ENCODE measurements at regions of chr3 and their contacts with region 1.

Region 1: DNA sequence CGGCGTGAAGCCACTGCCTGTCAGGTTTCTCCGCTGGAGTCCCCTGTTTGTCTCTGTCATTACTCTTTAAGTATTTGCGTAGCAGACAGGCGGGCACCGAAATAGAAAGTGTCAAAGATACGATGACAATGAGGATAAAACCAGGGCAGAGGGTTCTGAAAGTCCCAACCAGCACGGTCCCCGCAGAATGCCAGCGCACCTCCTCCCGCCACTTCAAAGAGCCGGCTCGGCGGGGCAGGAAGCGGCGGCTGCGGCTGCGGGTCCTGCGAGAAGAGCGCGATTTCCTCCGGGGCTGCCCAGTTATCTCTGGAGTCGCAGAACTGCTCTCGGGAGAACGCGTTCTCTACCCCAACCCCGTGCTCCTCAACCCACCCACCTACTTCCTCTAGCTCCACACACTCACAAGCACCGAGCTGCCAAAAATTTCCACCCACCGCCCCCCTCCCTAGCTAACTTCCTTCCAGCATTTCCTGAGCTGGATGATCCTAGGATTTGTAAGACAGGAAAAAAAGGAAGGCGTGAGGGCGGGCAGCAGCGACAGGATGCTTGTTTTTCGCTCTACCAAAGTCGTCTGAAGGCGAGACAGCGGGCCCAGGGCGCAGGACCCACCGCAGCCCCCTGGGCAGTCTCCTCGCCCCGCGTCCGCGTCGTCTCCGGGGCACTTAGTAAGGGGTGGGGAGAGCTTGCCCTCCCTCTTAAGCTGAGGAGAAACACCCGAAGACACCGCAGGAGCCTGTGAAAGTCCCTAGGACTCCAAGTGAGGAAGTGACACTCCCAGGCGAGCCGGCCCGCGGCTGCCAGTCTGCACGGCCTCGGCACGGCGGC is at the start of gene ARHGAP31:
- DNase-seq: peak; percentile 83 to 88 (median 86)
- ATAC-seq: peak; percentile 70 to 79 (median 76)
- H3K4me3 ChIP-seq: peak within 1 kb of the TSS; percentile 74 to 97 (median 88)
- H3K27ac ChIP-seq: peak within 1 kb of the TSS; percentile 96 to 100 (median 98)
- H3K4me1 ChIP-seq: peaks cover 3 to 55% (median 41%) of the 10 kb centered on the region in 12 donors
- H3K27me3 ChIP-seq: no peaks in the 10 kb centered on the region
- CTCF ChIP-seq: no peak
- POLR2A ChIP-seq: peak in 1 of 2 donors; percentile 70
- total RNA-seq, gene ARHGAP31: 29.8 to 79.1 (median 37.8) TPM

Region 2: GRCh38 chr3:119240591-119241434 is 53.3 kb before region 1 on chr3 and contains the start of gene B4GALT4:
- intact Hi-C with region 1: loop called in 1 of 10 experiments (anchors 5 kb)
- DNase-seq: peak; percentile 89 to 93 (median 92)
- ATAC-seq: peak; percentile 88 to 97 (median 96)
- H3K4me3 ChIP-seq: peak within 1 kb of the TSS; percentile 45 to 92 (median 73)
- H3K27ac ChIP-seq: peak within 1 kb of the TSS; percentile 75 to 97 (median 91)
- H3K4me1 ChIP-seq: peaks cover 0 to 47% (median 23%) of the 10 kb centered on the region in 12 donors
- H3K27me3 ChIP-seq: no peaks in the 10 kb centered on the region
- CTCF ChIP-seq: peak in 1 of 12 donors; percentile 6
- POLR2A ChIP-seq: peak; percentile 53 to 85
- total RNA-seq, gene B4GALT4: 8.1 to 15.9 (median 10.6) TPM

Region 3: DNA sequence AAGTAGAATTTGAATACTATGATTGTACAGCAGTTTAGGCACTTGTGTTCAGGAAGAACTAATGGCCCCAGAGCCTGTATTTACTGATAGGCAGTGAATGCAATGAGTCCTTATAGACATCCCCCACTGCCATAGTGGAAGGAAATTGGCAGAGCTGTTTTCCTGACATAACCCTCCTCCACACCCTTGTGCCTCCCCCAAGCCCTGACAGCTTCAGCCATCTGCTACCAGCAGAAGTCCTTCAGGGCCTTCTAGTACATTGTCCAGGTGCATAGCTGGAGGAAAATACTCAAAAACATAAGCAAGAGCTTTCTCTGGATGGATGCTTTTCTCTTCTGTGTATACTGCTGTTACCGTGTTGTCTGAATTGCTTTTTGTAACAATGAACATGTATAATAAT is 20.7 kb after region 1 on chr3:
- intact Hi-C with region 1: loop called in 1 of 10 experiments (anchors 2 kb)
- DNase-seq: no peak
- ATAC-seq: peak in 1 of 4 donors; percentile 32
- H3K4me3 ChIP-seq: no peak overlapping the region
- H3K27ac ChIP-seq: no peak overlapping the region
- H3K4me1 ChIP-seq: peaks cover 0 to 66% (median 43%) of the 10 kb centered on the region in 12 donors
- H3K27me3 ChIP-seq: no peaks in the 10 kb centered on the region
- CTCF ChIP-seq: no peak
- POLR2A ChIP-seq: no peak

Region 4: DNA sequence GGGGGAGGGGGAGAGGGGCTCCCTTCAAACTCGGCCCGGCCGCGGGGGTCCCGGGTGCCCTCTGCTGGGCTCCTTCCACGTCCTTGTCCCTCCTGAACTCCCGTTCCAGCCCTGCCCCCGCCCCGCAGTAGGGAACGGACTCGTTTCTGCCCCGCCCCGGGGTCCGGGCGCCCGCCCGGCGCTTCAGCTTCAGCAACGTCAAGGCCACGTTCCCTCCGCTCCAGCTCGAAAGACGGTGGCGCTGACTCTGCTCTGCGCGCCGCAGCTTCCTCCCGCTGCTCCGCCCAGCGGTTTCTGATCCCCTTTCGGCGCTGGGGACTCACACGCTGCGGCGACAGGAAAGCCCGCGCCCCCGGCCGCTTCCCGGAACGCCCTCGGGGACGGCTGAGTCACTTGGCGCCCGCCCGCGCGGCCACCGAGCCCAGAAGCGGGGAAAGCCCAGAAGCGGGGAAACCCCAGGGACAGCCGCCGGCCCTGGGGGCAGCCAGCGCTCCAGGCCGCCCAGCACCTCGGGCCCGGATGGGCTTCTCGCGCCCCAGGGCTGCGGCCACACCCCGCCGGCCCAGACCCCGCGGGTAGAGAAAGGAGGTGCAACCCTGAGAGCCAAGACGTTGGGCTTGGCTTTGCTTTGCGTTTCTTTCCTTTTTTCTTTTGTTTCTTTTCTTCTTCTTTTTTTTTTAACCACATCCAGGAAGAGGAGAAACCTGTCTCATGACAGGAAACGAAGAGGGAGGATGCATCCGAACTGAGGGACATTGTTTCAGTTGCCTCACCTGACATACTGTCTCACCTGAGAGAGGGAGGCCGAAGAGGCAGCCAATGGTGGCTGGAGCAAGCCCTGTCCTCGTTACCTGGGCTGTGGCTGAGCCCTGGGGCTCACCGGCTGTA is 29.0 kb after region 1 on chr3:
- intact Hi-C with region 1: loop called in 5 of 10 experiments (anchors 2 kb)
- DNase-seq: peak; percentile 90 to 96 (median 93)
- ATAC-seq: peak; percentile 84 to 95 (median 93)
- H3K4me3 ChIP-seq: peak overlapping the region; percentile 8 to 76 (median 64)
- H3K27ac ChIP-seq: peak overlapping the region; percentile 80 to 98 (median 92)
- H3K4me1 ChIP-seq: peaks cover 0 to 73% (median 43%) of the 10 kb centered on the region in 12 donors
- H3K27me3 ChIP-seq: no peaks in the 10 kb centered on the region
- CTCF ChIP-seq: peak in 8 of 12 donors; percentile 9 to 44 (median 25)
- POLR2A ChIP-seq: peak in 1 of 2 donors; percentile 39

Region 5: GRCh38 chr3:119331661-119332060 is 37.6 kb after region 1 on chr3:
- intact Hi-C with region 1: loop called in 2 of 10 experiments (anchors 1 to 5 kb)
- DNase-seq: no peak
- ATAC-seq: peak in 2 of 4 donors; percentile 36 to 46
- H3K4me3 ChIP-seq: no peak overlapping the region
- H3K27ac ChIP-seq: peak overlapping the region in 8 of 12 donors; percentile 32 to 79 (median 52)
- H3K4me1 ChIP-seq: peaks cover 12 to 69% (median 41%) of the 10 kb centered on the region in 12 donors
- H3K27me3 ChIP-seq: no peaks in the 10 kb centered on the region
- CTCF ChIP-seq: no peak
- POLR2A ChIP-seq: no peak

Region 6: DNA sequence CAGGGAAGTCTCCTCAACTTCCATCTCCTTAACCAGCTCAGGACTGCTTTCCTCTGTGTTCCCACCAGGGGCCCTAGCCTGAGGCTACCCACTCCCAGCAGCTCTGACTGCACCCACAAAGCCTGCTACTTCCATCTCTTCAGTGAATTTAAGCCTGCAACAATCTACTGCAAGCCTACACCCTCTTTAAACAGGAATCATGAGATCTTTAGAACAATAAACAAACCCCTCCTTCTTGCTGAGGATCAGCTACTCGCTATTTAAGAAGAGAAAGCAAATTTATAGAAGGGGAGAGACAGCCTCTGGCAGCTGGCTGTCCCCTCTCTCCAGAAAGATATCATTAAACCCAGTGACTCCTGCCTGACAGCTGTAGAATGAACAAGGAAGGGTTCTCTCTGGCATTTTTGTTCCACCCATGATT is 52.0 kb after region 1 on chr3:
- intact Hi-C with region 1: loop called in 2 of 10 experiments (anchors 5 kb)
- DNase-seq: no peak
- ATAC-seq: no peak
- H3K4me3 ChIP-seq: no peak overlapping the region
- H3K27ac ChIP-seq: peak overlapping the region in 5 of 12 donors; percentile 17 to 40 (median 23)
- H3K4me1 ChIP-seq: peaks cover 6 to 69% (median 52%) of the 10 kb centered on the region in 12 donors
- H3K27me3 ChIP-seq: no peaks in the 10 kb centered on the region
- CTCF ChIP-seq: no peak
- POLR2A ChIP-seq: no peak

Region 7: GRCh38 chr3:119352849-119353502 is 58.9 kb after region 1 on chr3:
- intact Hi-C with region 1: loop called in 2 of 10 experiments (anchors 5 kb)
- DNase-seq: no peak
- ATAC-seq: peak; percentile 39 to 69 (median 57)
- H3K4me3 ChIP-seq: no peak overlapping the region
- H3K27ac ChIP-seq: peak overlapping the region in 11 of 12 donors; percentile 6 to 76 (median 34)
- H3K4me1 ChIP-seq: peaks cover 11 to 75% (median 60%) of the 10 kb centered on the region in 12 donors
- H3K27me3 ChIP-seq: no peaks in the 10 kb centered on the region
- CTCF ChIP-seq: peak in 11 of 12 donors; percentile 12 to 62 (median 39)
- POLR2A ChIP-seq: no peak

Measured in heart left ventricle (tissue), 16 donors.